ENCODE measurements at regions of chr1 and their contacts with region 1.

Region 1: GRCh38 chr1:67853704-67854103 is 20.4 kb upstream of the GNG12 start:
- DNase-seq: peak; percentile 86
- ATAC-seq: peak; percentile 81
- H3K4me3 ChIP-seq: no peak overlapping the region
- H3K27ac ChIP-seq: no peak overlapping the region
- H3K4me1 ChIP-seq: peaks cover 8% of the 10 kb centered on the region
- H3K27me3 ChIP-seq: no peaks in the 10 kb centered on the region
- CTCF ChIP-seq: peak; percentile 97
- POLR2A ChIP-seq: peak; percentile 54; the same call in 1 of the 2 replicates
- RAD21 ChIP-seq: peak; percentile 99

Region 2: DNA sequence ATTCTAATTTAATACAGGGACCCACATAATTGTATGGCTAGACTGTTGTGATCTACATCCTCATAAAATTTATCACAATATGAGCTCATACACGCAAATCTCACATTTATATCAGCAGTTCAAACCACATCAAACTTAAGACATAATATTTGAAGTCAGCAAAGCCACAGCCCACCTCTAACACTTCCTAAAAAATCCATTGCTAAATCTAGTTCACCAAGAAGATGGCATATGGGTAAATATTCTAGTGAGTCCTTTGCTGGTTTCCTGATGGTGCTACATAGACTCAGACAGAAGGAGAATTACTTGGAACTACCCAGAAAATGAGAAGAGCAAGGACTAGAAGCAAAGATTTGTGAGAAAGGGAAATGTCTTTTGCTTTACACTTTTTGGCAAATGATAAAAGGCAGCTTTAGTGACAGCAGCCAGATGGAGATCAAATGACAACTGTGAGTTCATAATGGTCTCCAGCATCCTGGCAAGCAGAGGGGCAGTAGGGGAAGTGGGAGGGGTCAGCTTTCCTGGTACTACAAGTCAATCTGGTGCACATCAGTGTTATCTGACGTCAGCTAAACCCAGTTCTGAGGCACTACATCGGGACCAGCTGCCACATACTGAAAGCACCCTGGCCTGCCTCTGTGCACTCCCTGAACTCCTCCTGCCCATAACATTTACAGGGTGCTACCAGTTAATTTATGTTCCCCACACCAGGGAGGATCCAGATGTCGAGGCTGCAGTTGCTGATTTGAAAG is 179.3 kb before region 1 on chr1:
- CTCF ChIA-PET with region 1: no interaction called
- POLR2A ChIA-PET with region 1: no interaction called
- dilution Hi-C with region 1: no loop called
- in situ Hi-C with region 1: no loop called
- intact Hi-C with region 1: no loop called
- DNase-seq: peak; percentile 76
- ATAC-seq: peak; percentile 74
- H3K4me3 ChIP-seq: no peak overlapping the region
- H3K27ac ChIP-seq: no peak overlapping the region
- H3K4me1 ChIP-seq: peaks cover 4% of the 10 kb centered on the region
- H3K27me3 ChIP-seq: no peaks in the 10 kb centered on the region; the same call in 1 of the 2 replicates
- CTCF ChIP-seq: no peak
- POLR2A ChIP-seq: no peak
- RAD21 ChIP-seq: no peak

Region 3: DNA sequence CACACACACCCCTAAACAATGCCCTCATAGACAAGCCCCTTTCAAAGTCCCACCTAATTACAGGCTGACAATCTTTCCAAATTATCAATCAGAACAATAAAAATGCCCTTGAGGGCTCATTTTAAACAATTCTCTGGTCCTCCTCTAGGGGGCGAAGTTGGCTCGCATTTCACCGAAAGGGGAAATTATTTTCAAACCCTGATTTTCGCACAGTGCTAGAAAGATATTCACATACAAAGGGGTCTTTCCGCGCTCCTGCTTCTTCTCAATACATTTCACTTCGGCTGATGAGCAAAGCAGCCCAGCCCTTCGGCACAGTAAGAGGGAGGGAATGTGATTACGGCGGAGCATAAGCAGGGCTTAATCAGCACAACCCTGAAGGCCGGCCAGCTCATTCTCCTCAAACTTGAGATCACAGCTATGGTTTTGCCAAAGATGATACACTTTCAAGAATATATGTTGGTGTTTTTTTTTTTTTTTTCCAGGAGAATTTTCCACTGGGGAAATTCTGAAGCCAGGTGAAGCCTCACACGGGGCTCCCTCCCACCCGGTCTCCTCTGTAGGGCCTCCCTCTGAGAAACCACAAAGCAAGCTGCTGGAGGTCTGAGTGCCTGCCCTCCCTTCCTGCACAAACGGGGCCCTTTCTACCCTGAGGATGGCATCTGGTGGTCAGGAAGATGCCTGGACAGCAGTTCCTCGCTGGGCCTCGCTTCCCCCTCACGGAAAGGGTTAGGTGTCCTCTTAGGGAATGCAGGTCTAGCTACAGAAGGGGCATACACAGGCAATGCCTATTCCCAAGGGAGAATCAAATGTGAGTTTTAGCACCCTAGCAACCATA is 87.3 kb before region 1 on chr1:
- CTCF ChIA-PET with region 1: interaction called, 8 read pairs
- POLR2A ChIA-PET with region 1: no interaction called
- dilution Hi-C with region 1: no loop called
- in situ Hi-C with region 1: no loop called
- intact Hi-C with region 1: loop called (anchors 1 kb)
- DNase-seq: peak; percentile 94
- ATAC-seq: peak; percentile 83
- H3K4me3 ChIP-seq: no peak overlapping the region; the same call in 1 of the 2 replicates
- H3K27ac ChIP-seq: peak overlapping the region; percentile 65
- H3K4me1 ChIP-seq: peaks cover 27% of the 10 kb centered on the region
- H3K27me3 ChIP-seq: no peaks in the 10 kb centered on the region
- CTCF ChIP-seq: peak; percentile 63
- POLR2A ChIP-seq: no peak
- RAD21 ChIP-seq: peak; percentile 63

Region 4: GRCh38 chr1:68000191-68000590 is 146.5 kb after region 1 on chr1:
- CTCF ChIA-PET with region 1: no interaction called
- POLR2A ChIA-PET with region 1: no interaction called
- dilution Hi-C with region 1: no loop called
- in situ Hi-C with region 1: loop called (anchors 10 kb)
- intact Hi-C with region 1: no loop called
- DNase-seq: no peak
- ATAC-seq: no peak
- H3K4me3 ChIP-seq: no peak overlapping the region
- H3K27ac ChIP-seq: no peak overlapping the region
- H3K4me1 ChIP-seq: no peaks in the 10 kb centered on the region
- H3K27me3 ChIP-seq: no peaks in the 10 kb centered on the region
- CTCF ChIP-seq: no peak
- POLR2A ChIP-seq: no peak
- RAD21 ChIP-seq: no peak

Region 5: GRCh38 chr1:68051475-68051874 is 197.8 kb after region 1 on chr1:
- CTCF ChIA-PET with region 1: interaction called, 3 read pairs
- POLR2A ChIA-PET with region 1: no interaction called
- dilution Hi-C with region 1: no loop called
- in situ Hi-C with region 1: no loop called
- intact Hi-C with region 1: loop called (anchors 1 kb)
- DNase-seq: peak; percentile 68
- ATAC-seq: peak; percentile 82
- H3K4me3 ChIP-seq: peak overlapping the region; percentile 51
- H3K27ac ChIP-seq: peak overlapping the region; percentile 26; the same call in 1 of the 2 replicates
- H3K4me1 ChIP-seq: no peaks in the 10 kb centered on the region
- H3K27me3 ChIP-seq: no peaks in the 10 kb centered on the region
- CTCF ChIP-seq: peak; percentile 50
- POLR2A ChIP-seq: no peak
- RAD21 ChIP-seq: peak; percentile 57

Region 6: DNA sequence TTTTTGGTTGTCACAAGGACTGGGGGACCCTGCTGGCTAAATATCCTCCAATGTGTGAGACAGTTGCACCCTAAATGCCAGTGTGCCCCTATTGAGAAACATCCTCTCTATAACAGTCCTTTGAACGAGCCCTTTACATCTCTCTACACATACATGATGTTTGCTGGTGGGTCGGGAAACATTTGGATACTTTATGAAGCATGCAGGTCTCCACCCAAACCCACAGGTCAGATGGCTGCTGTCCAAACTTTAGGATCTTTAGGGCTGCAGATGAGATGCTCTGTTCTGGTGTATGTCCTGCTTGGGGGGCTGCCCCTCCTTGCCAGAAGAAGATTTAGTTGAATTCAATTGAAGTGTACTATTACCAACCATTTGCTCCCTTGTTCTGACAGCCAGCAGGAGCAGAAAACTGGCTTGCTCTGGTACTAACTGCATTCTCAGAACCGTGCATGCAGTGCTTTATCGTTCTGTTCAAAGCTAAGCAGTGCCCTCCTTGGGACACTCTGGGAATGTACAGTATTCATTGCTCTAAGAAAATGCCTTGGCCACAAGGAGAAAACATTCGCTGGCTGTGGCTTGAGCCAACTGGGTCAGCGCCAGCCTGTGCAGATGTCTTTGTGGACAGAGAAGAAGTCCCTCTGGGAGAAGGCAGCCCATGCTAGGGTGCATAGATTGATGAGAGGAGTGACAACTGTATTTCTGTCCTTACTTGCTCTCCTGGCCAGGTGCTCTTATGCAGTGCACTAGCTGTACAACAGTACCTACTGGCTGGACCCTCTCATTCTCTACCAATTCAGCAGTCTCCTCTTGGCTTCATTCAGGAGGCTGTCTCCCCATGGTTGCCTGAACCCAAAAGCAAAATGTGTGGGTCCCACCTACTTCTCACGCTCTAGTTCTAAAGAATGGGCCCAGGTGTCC is 258.1 kb after region 1 on chr1:
- CTCF ChIA-PET with region 1: interaction called, 8 read pairs
- POLR2A ChIA-PET with region 1: no interaction called
- dilution Hi-C with region 1: no loop called
- in situ Hi-C with region 1: no loop called
- intact Hi-C with region 1: loop called (anchors 1 kb)
- DNase-seq: peak; percentile 93
- ATAC-seq: peak; percentile 85
- H3K4me3 ChIP-seq: no peak overlapping the region
- H3K27ac ChIP-seq: no peak overlapping the region
- H3K4me1 ChIP-seq: peaks cover 9% of the 10 kb centered on the region
- H3K27me3 ChIP-seq: no peaks in the 10 kb centered on the region
- CTCF ChIP-seq: peak; percentile 83
- POLR2A ChIP-seq: 0 out of 2 replicates have a peak, but pooled peaks have one; percentile 30
- RAD21 ChIP-seq: peak; percentile 95

Region 7: DNA sequence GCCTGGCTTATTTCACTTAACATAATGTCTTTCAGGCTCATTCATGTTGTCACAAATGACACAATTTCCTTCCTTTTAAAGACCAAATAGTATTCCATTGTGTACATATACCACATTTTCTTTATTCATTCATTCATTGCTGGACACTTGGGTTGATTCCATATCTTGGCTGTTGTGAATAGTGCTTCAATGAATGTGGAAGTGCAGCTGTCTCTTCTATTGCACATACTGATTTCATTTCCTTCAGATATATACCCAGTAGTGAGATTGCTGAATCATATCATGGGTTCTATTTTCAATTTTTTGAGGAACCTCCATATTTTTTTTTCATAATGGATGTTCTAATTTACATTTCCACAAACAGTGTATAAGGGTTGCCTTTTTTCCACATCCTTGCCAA is 417.2 kb after region 1 on chr1:
- CTCF ChIA-PET with region 1: no interaction called
- POLR2A ChIA-PET with region 1: no interaction called
- dilution Hi-C with region 1: no loop called
- in situ Hi-C with region 1: no loop called
- intact Hi-C with region 1: no loop called
- DNase-seq: peak; percentile 14
- ATAC-seq: no peak
- H3K4me3 ChIP-seq: no peak overlapping the region
- H3K27ac ChIP-seq: no peak overlapping the region
- H3K4me1 ChIP-seq: peaks cover 3% of the 10 kb centered on the region
- H3K27me3 ChIP-seq: no peaks in the 10 kb centered on the region
- CTCF ChIP-seq: no peak
- POLR2A ChIP-seq: no peak
- RAD21 ChIP-seq: no peak

Region 8: GRCh38 chr1:69737527-69738185 is 1884.0 kb after region 1 on chr1:
- CTCF ChIA-PET with region 1: no interaction called
- POLR2A ChIA-PET with region 1: no interaction called
- dilution Hi-C with region 1: no loop called
- in situ Hi-C with region 1: no loop called
- intact Hi-C with region 1: loop called (anchors 5 kb)
- DNase-seq: peak; percentile 67
- ATAC-seq: peak; percentile 70
- H3K4me3 ChIP-seq: no peak overlapping the region
- H3K27ac ChIP-seq: no peak overlapping the region
- H3K4me1 ChIP-seq: no peaks in the 10 kb centered on the region
- H3K27me3 ChIP-seq: no peaks in the 10 kb centered on the region
- CTCF ChIP-seq: peak; percentile 68
- POLR2A ChIP-seq: no peak
- RAD21 ChIP-seq: peak; percentile 78